Activated T-helper 2 cell treated with anti-CD3 and anti-CD28 coated beads, Interferon-gamma antibody, Interleukin-2, Interleukin-4, amounts not matched to agents 10 μg/mL and 5 μg/mL and 100 μg/mL, durations not matched to agents 14 hours and 24 hours and 36 hours (primary cell): ENCODE measurements at regions of chrX and their contacts with region 1.

Region 1: GRCh38 chrX:108224727-108225621 is 133.4 kb downstream of the ATG4A start:
- DNase-seq: no peak
- H3K4me3 Mint-ChIP-seq: no peak overlapping the region
- H3K27ac Mint-ChIP-seq: no peak overlapping the region
- H3K4me1 Mint-ChIP-seq: no peaks in the 10 kb centered on the region
- H3K27me3 Mint-ChIP-seq: peaks cover 4% of the 10 kb centered on the region

Region 2: DNA sequence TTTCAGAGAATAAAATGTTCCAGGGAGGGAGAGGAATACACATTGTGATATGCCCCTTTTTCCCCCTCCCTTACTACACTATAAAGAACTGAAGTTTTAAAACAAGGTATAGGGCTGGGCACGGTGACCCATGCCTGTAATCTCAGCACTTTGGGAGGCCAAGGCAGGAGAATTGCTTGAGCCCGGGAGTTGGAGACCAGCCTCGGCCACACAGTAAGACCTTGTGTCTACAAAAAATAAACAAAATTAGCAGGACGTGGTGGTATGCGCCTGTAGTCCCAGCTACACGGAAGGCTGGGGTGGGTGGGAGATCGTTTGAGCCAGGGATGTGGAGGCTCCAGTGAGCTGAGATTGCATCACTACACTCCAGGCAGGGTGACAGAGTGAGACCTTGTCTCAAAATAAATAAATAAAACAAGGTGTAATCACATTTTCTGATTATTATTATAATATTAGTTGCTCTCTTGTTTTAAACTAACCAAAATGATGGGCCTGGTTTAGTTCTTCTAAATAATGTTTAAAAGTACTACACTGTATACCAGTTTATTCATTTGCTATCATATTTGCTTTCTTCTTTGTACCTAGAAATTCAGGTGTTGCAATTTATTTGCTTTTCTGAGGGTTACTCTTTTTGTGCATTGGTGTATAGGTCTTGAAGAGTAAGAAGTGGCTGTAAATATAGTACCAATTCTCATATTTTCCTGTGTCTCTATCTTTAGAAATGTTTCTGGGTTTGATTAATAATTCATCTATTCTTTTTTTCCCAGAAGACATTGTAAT is 1413.7 kb before region 1 on chrX:
- intact Hi-C with region 1: no loop called
- DNase-seq: no peak
- H3K4me3 Mint-ChIP-seq: no peak overlapping the region
- H3K27ac Mint-ChIP-seq: no peak overlapping the region
- H3K4me1 Mint-ChIP-seq: no peaks in the 10 kb centered on the region
- H3K27me3 Mint-ChIP-seq: no peaks in the 10 kb centered on the region

Region 3: GRCh38 chrX:108250654-108251579 is 25.9 kb after region 1 on chrX:
- intact Hi-C with region 1: no loop called
- DNase-seq: no peak
- H3K4me3 Mint-ChIP-seq: no peak overlapping the region
- H3K27ac Mint-ChIP-seq: no peak overlapping the region
- H3K4me1 Mint-ChIP-seq: no peaks in the 10 kb centered on the region
- H3K27me3 Mint-ChIP-seq: peaks cover 2% of the 10 kb centered on the region

Region 4: DNA sequence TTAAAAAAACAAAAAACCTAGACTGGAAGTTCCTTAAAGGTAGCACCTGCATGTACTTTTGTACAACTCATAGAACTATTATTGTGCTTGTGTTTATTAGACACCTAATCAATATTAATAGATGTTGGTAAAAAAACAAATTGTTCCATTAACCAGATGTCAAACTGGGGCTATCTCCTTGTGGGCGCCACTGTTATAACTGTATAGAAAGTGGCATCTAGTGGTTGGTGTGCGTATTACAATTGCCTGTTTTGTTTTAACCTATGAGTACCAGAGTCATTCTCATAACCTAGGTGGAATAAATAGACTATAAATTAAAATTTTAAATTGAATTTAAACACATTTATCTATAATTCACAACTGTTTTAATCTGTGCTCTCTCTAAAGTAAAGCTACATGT is 312.0 kb after region 1 on chrX:
- intact Hi-C with region 1: loop called (anchors 10 kb)
- DNase-seq: no peak
- H3K4me3 Mint-ChIP-seq: no peak overlapping the region
- H3K27ac Mint-ChIP-seq: no peak overlapping the region
- H3K4me1 Mint-ChIP-seq: no peaks in the 10 kb centered on the region
- H3K27me3 Mint-ChIP-seq: no peaks in the 10 kb centered on the region